GM10248 (cell line): ENCODE measurements at regions of chr1 and their contacts with region 1.

Region 1: DNA sequence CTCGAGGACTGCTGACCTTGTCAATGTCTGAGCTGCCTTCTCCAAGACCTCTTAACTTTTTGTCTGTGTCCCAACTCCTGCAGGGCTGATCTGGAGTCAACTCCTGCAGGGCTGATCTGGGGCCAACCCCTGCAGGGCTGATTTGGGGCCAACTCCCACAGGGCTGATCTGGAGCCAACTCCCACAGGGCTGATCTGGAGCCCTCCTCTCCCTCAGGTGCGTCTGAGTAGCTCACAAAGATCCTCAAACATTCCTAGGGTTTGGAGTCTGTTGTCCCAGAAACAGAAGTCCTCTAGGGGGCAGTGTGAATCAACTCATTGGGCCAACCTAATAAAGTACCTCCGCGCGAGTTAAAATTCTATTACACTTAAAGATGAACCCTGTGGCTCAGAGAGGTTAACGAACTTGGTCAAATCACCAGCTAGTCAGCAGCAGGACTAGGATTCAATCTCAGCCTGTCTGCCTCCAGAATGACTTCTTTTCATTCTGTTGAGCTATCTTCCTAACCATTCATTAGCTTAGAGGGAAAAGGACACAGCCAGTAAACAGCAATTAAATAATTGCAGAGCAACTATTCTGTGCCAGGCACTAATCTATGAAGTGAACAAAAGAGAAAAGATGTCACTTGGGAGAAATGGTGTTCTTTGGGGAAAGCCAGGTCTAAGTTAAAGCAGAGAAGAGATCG is 17.2 kb upstream of the RLF start:
- DNase-seq: peak; percentile 54
- CTCF ChIP-seq: peak; percentile 48

Region 2: GRCh38 chr1:40122855-40123254 is 21.2 kb before region 1 on chr1:
- CTCF ChIA-PET with region 1: interaction called, 19 read pairs
- POLR2A ChIA-PET with region 1: no interaction called
- DNase-seq: no peak
- CTCF ChIP-seq: no peak

Region 3: DNA sequence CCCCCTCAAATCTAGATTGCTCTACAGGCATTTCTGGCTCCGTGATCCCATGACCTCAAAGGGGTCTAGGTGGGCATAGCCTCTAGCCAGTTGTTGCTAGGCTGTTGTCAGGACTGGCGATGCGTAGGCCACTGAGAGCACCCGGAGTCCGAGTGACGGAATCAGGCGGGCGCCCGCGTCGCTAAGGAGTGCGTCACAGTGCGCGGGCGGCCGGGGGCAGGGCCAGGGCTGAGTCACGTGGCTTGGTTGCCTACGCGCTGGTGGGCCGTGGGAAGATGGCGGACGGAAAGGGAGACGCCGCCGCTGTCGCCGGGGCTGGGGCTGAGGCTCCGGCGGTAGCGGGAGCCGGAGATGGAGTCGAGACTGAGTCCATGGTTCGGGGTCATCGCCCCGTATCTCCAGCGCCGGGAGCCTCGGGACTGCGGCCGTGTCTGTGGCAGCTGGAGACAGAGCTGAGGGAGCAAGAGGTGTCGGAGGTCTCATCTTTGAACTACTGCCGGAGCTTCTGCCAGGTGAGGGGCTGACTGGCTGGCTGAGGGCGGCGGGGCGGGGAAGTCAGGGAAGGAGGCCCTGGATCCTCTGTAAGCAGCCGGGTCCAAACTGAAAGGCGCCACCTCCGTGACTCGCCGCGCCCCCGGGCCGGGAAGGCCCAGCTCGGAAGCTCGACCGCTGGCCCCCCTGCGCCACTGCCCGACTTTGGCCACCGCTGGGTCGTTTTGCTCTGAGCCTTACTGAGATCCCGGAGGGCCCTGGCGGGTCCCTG is 17.3 kb after region 1 on chr1 and contains the start of gene RLF:
- CTCF ChIA-PET with region 1: interaction called, 14 read pairs
- POLR2A ChIA-PET with region 1: no interaction called
- DNase-seq: peak; percentile 96
- CTCF ChIP-seq: no peak

Region 4: DNA sequence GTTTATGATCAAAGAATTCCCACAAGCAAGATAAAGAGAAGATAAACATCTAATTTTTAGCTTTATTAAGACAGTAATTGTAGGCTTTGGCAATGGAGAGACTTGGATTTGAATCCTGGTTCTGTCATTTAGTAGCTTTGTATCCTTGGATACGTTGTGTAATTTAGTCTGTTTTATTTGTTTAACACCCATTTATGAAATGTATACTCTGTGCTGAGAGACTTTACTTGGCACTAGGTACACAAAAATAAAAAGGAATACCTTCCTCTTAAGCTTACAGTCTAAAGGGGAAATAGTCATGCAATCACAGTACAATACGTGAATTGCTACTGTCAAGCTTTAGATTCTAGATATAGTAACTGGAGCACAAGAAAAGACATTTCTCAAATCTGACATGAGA is 137.8 kb after region 1 on chr1:
- CTCF ChIA-PET with region 1: interaction called, 13 read pairs
- POLR2A ChIA-PET with region 1: no interaction called
- DNase-seq: no peak
- CTCF ChIP-seq: no peak

Region 5: DNA sequence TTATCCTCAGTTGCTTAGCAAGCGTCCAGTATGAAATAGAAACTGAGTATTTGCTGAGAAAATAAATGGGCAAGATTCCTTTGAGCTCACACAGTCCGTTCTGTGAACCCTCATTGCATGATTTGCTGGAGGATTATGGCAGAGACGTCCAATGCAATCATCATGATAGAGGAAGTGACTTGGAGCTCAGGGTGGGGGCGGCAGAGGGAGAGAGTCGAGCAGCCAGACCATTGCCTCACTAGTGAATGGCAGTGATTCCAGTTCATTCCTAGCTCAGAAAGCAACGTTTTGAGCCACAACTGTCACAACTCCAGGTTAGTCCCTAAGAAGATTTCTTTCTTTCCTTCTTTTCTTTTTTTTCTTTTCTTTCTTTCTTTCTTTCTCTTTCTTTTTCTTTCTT is 200.6 kb after region 1 on chr1:
- CTCF ChIA-PET with region 1: interaction called, 182 read pairs
- POLR2A ChIA-PET with region 1: no interaction called
- DNase-seq: peak; percentile 41
- CTCF ChIP-seq: no peak

Region 6: DNA sequence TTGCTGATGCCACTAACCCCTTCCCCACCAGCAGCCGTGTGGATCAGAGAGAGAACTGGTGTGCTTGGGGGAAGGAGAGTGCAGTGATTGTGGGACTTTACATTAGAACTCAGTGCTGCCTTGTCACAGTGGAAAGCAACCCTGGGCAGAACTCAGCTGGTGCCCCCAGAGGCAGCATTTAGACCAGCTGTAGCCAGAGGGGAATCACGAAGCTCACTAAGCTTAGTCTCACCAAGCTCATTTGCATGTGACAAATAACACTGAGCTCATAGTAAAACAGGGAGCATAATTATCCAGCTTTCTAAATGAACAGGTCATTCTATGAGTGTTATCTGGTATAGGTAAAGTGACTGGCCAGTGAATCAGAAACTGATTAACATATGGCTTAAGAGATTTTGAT is 219.7 kb after region 1 on chr1:
- CTCF ChIA-PET with region 1: interaction called, 14 read pairs
- POLR2A ChIA-PET with region 1: no interaction called
- DNase-seq: peak; percentile 48
- CTCF ChIP-seq: peak; percentile 25

Region 7: GRCh38 chr1:40404670-40405462 is 260.8 kb after region 1 on chr1:
- CTCF ChIA-PET with region 1: interaction called, 22 read pairs
- POLR2A ChIA-PET with region 1: no interaction called
- DNase-seq: no peak
- CTCF ChIP-seq: peak; percentile 69

Region 8: DNA sequence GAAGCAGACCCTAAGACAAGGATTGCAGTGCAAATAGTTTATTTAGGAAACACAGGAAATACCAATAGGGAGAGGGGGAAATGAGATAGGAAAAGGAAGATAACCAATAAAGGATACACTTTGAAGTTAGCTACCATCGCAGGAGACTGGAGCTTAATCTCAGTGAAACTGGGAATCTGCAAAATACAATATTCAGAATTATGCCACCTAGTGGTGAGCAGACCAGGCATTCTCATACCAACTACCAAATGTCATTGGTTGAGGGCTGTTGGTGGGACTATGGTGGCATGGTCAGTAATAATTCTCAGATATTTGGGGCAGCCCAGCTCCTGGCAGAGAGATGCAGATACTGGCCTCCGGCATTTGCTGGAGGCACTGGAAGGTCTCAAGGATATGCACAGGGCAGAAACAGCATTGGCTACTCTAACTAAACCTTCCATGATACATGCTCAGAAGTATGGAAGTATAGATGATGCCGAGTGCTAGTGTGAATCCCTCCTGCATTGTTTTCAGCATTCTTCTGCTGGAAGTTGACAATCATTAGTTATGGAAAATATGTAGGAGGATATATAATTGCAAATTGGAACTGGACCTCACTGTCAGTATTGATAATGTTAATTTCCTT is 294.5 kb after region 1 on chr1:
- CTCF ChIA-PET with region 1: no interaction called
- POLR2A ChIA-PET with region 1: no interaction called
- DNase-seq: peak; percentile 34
- CTCF ChIP-seq: no peak